ENCODE measurements at regions of chr20 and their contacts with region 1.

Region 1: GRCh38 chr20:44388466-44389023 is 33.0 kb downstream of the HNF4A start:
- DNase-seq: peak; percentile 56 to 61
- H3K4me3 ChIP-seq: no peak overlapping the region
- H3K27ac ChIP-seq: no peak overlapping the region
- H3K4me1 ChIP-seq: peaks cover 0 to 5% of the 10 kb centered on the region in 2 donors
- H3K27me3 ChIP-seq: no peaks in the 10 kb centered on the region
- CTCF ChIP-seq: peak; percentile 44 to 74 (median 62)
- POLR2A ChIP-seq: no peak

Region 2: GRCh38 chr20:44210422-44211176 is 177.9 kb before region 1 on chr20 and contains the start of gene OSER1:
- intact Hi-C with region 1: loop called (anchors 10 kb)
- DNase-seq: peak; percentile 98
- H3K4me3 ChIP-seq: peak within 1 kb of the TSS; percentile 73 to 83 (median 73)
- H3K27ac ChIP-seq: peak within 1 kb of the TSS; percentile 87 to 95 (median 93)
- H3K4me1 ChIP-seq: peaks cover 27 to 31% of the 10 kb centered on the region in 2 donors
- H3K27me3 ChIP-seq: no peaks in the 10 kb centered on the region
- CTCF ChIP-seq: no peak
- POLR2A ChIP-seq: peak; percentile 87 to 95
- total RNA-seq, gene OSER1: 36.2 to 56.4 (median 43.0) TPM

Region 3: GRCh38 chr20:44435630-44436335 is 47.2 kb after region 1 on chr20:
- intact Hi-C with region 1: no loop called
- DNase-seq: no peak
- H3K4me3 ChIP-seq: no peak overlapping the region
- H3K27ac ChIP-seq: no peak overlapping the region
- H3K4me1 ChIP-seq: no peaks in the 10 kb centered on the region
- H3K27me3 ChIP-seq: peaks cover 2% of the 10 kb centered on the region
- CTCF ChIP-seq: no peak
- POLR2A ChIP-seq: no peak

Region 4: GRCh38 chr20:44615169-44615791 is 226.7 kb after region 1 on chr20:
- intact Hi-C with region 1: loop called (anchors 5 kb)
- DNase-seq: peak in 1 of 2 donors; percentile 15
- H3K4me3 ChIP-seq: no peak overlapping the region
- H3K27ac ChIP-seq: peak overlapping the region; percentile 50 to 79 (median 52)
- H3K4me1 ChIP-seq: peaks cover 38 to 54% of the 10 kb centered on the region in 2 donors
- H3K27me3 ChIP-seq: no peaks in the 10 kb centered on the region
- CTCF ChIP-seq: no peak
- POLR2A ChIP-seq: no peak

Measured in thyroid gland (tissue), 4 donors.